ENCODE measurements at regions of chr1 and their contacts with region 1.

Region 1: GRCh38 chr1:224052772-224053171 is 61.1 kb upstream of the FBXO28 start:
- DNase-seq: no peak
- ATAC-seq: no peak
- H3K4me3 ChIP-seq: no peak overlapping the region
- H3K27ac ChIP-seq: no peak overlapping the region
- H3K4me1 ChIP-seq: no peaks in the 10 kb centered on the region
- H3K27me3 ChIP-seq: no peaks in the 10 kb centered on the region
- CTCF ChIP-seq: no peak
- EP300 ChIP-seq: no peak
- POLR2A ChIP-seq: no peak
- RAD21 ChIP-seq: no peak

Region 2: DNA sequence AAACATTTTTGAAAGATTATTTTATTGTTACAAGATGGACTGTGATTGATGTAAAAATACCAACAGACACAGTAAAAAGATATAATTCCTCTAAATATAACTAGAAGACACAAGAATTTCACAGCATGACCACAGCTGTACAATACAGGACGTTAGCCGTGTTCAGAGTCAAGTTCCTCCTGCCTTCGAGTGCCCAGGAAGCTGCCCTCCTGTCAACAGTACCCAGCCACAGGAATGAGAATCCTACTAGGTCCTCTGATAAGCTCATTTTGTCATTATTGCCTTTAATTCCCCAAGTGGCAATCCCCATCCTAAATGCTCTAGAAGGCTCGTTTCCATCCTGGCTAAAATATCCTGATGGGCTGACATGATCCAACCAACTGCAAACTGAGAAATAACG is 356.8 kb before region 1 on chr1:
- CTCF ChIA-PET with region 1: interaction called, 11 read pairs
- POLR2A ChIA-PET with region 1: interaction called, 3 read pairs
- RAD21 ChIA-PET with region 1: interaction called, 6 read pairs
- SMC1A ChIA-PET with region 1: interaction called, 5 read pairs
- in situ Hi-C with region 1: loop called (anchors 5 kb)
- intact Hi-C with region 1: loop called (anchors 1 kb)
- DNase-seq: no peak
- ATAC-seq: no peak
- H3K4me3 ChIP-seq: no peak overlapping the region
- H3K27ac ChIP-seq: no peak overlapping the region
- H3K4me1 ChIP-seq: peaks cover 3% of the 10 kb centered on the region; the same call in 1 of the 2 replicates
- H3K27me3 ChIP-seq: no peaks in the 10 kb centered on the region
- CTCF ChIP-seq: no peak
- EP300 ChIP-seq: no peak
- POLR2A ChIP-seq: no peak
- RAD21 ChIP-seq: no peak

Region 3: GRCh38 chr1:223700942-223701637 is 351.7 kb before region 1 on chr1:
- CTCF ChIA-PET with region 1: interaction called, 11 read pairs
- POLR2A ChIA-PET with region 1: interaction called, 3 read pairs
- RAD21 ChIA-PET with region 1: interaction called, 6 read pairs
- SMC1A ChIA-PET with region 1: interaction called, 5 read pairs
- in situ Hi-C with region 1: no loop called
- intact Hi-C with region 1: loop called (anchors 1 kb)
- DNase-seq: no peak
- ATAC-seq: no peak; the same call in 2 of the 3 replicates
- H3K4me3 ChIP-seq: no peak overlapping the region
- H3K27ac ChIP-seq: no peak overlapping the region
- H3K4me1 ChIP-seq: peaks cover 6% of the 10 kb centered on the region
- H3K27me3 ChIP-seq: no peaks in the 10 kb centered on the region
- CTCF ChIP-seq: no peak
- EP300 ChIP-seq: no peak
- POLR2A ChIP-seq: no peak
- RAD21 ChIP-seq: no peak

Region 4: GRCh38 chr1:223811634-223812415 is 240.9 kb before region 1 on chr1:
- CTCF ChIA-PET with region 1: interaction called, 31 read pairs
- POLR2A ChIA-PET with region 1: no interaction called
- RAD21 ChIA-PET with region 1: interaction called, 7 read pairs
- SMC1A ChIA-PET with region 1: interaction called, 10 read pairs
- in situ Hi-C with region 1: no loop called
- intact Hi-C with region 1: no loop called
- DNase-seq: no peak
- ATAC-seq: peak; percentile 66
- H3K4me3 ChIP-seq: no peak overlapping the region
- H3K27ac ChIP-seq: no peak overlapping the region
- H3K4me1 ChIP-seq: no peaks in the 10 kb centered on the region
- H3K27me3 ChIP-seq: no peaks in the 10 kb centered on the region
- CTCF ChIP-seq: peak; percentile 27 to 63 (median 45); a peak in 5 of 6 replicates
- EP300 ChIP-seq: no peak
- POLR2A ChIP-seq: no peak
- RAD21 ChIP-seq: peak; percentile 79

Region 5: DNA sequence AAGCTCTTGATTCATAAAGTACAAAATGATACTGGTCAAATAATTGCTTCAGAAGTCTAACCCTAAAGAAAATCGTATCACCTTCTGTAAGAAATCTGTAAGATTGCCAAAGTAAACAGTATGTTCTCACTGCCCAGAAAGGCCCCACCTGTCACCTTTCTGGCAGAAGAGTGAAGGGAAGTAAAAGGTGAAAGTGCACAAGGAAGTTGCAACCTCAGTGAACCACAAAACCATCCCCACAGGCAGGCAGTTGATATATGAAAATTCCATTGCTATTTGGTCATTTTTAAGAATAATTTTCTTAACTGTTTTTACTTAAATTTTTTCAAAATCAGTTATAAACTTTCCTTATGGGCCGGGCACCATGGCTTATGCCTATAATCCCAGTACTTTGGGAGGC is 12.7 kb after region 1 on chr1:
- CTCF ChIA-PET with region 1: interaction called, 9 read pairs
- POLR2A ChIA-PET with region 1: no interaction called
- RAD21 ChIA-PET with region 1: no interaction called
- SMC1A ChIA-PET with region 1: interaction called, 14 read pairs
- in situ Hi-C with region 1: no loop called
- intact Hi-C with region 1: no loop called
- DNase-seq: no peak
- ATAC-seq: peak; percentile 55
- H3K4me3 ChIP-seq: no peak overlapping the region
- H3K27ac ChIP-seq: no peak overlapping the region
- H3K4me1 ChIP-seq: no peaks in the 10 kb centered on the region
- H3K27me3 ChIP-seq: peaks cover 0 to 2% of the 10 kb centered on the region in 2 experiments; a peak in 1 of 4 replicates
- CTCF ChIP-seq: no peak
- EP300 ChIP-seq: no peak
- POLR2A ChIP-seq: no peak
- RAD21 ChIP-seq: no peak

Region 6: DNA sequence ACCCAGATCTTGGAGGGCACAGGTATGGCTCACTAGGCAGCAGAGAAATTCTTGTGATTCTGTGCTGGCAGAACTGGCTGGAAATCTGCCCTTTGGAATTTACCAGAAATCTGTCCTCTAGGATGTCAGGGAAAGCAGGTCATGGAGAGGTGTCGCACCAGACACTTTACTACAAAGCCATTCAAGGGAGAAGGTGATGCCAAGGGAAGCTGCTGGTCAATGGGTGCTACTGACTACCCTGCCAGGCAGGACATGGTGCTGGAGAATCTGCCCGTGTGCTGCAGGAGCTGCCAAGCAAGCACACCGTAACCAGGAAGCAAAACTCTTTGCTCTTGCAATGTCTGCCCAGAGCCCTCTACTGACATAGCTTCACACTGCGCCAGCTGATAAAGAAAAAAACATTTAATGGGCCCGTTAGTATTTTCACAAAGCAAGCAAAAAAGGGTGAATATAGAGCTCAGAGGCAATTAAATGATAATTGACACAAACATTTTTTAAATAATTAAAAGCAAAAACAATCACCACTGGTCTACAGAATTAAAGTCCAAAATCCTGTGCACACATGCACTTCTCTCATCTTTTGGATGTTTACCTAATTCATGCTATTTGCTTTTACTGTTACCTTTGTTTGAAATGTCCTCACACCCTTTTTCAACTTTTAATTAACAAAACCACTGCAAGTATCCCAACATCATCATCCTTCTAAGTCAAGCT is 54.0 kb after region 1 on chr1:
- CTCF ChIA-PET with region 1: interaction called, 18 read pairs
- POLR2A ChIA-PET with region 1: no interaction called
- RAD21 ChIA-PET with region 1: interaction called, 3 read pairs
- SMC1A ChIA-PET with region 1: interaction called, 3 read pairs
- in situ Hi-C with region 1: no loop called
- intact Hi-C with region 1: no loop called
- DNase-seq: no peak
- ATAC-seq: peak; percentile 99
- H3K4me3 ChIP-seq: no peak overlapping the region
- H3K27ac ChIP-seq: no peak overlapping the region
- H3K4me1 ChIP-seq: no peaks in the 10 kb centered on the region
- H3K27me3 ChIP-seq: no peaks in the 10 kb centered on the region
- CTCF ChIP-seq: peak; percentile 48 to 51 (median 50)
- EP300 ChIP-seq: no peak
- POLR2A ChIP-seq: peak; percentile 42; the same call in 1 of the 2 replicates
- RAD21 ChIP-seq: peak; percentile 54